Activated CD8-positive, alpha-beta T cell treated with anti-CD3 and anti-CD28 coated beads for 36 hours (primary cell): ENCODE measurements at regions of chr5 and their contacts with region 1.

Region 1: GRCh38 chr5:139293504-139294373 is at the start of gene MATR3:
- DNase-seq: peak; percentile 96
- ATAC-seq: peak; percentile 94
- H3K4me3 Mint-ChIP-seq: peak within 1 kb of the TSS; percentile 99
- H3K27ac Mint-ChIP-seq: peak within 1 kb of the TSS; percentile 98
- H3K4me1 Mint-ChIP-seq: peaks cover 32% of the 10 kb centered on the region
- H3K27me3 Mint-ChIP-seq: no peaks in the 10 kb centered on the region
- CTCF ChIP-seq: no peak
- total RNA-seq, gene MATR3: 181 to 209 TPM

Region 2: DNA sequence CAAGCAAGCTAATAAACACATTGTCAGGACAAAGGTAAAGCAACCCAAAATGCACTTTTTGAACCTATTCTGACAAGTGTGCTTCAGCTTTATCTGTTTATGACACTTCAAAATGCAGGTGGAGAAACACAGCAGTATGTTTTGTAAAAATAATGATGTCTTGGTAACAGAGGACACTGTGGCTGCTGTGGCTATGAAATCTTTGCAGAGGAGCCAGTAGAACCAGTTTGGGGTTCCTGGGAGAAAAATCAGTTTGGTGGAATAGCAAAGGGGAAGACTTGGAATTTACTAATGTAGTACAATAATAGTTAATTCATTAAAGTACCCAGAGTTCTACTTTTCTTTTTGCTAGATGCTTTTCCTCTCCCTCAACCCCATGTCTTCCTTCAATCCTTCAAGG is 136.2 kb before region 1 on chr5:
- CTCF ChIA-PET with region 1: no interaction called
- POLR2A ChIA-PET with region 1: no interaction called
- intact Hi-C with region 1: no loop called
- DNase-seq: no peak
- ATAC-seq: no peak
- H3K4me3 Mint-ChIP-seq: no peak overlapping the region
- H3K27ac Mint-ChIP-seq: no peak overlapping the region
- H3K4me1 Mint-ChIP-seq: peaks cover 3% of the 10 kb centered on the region
- H3K27me3 Mint-ChIP-seq: no peaks in the 10 kb centered on the region
- CTCF ChIP-seq: no peak

Region 3: DNA sequence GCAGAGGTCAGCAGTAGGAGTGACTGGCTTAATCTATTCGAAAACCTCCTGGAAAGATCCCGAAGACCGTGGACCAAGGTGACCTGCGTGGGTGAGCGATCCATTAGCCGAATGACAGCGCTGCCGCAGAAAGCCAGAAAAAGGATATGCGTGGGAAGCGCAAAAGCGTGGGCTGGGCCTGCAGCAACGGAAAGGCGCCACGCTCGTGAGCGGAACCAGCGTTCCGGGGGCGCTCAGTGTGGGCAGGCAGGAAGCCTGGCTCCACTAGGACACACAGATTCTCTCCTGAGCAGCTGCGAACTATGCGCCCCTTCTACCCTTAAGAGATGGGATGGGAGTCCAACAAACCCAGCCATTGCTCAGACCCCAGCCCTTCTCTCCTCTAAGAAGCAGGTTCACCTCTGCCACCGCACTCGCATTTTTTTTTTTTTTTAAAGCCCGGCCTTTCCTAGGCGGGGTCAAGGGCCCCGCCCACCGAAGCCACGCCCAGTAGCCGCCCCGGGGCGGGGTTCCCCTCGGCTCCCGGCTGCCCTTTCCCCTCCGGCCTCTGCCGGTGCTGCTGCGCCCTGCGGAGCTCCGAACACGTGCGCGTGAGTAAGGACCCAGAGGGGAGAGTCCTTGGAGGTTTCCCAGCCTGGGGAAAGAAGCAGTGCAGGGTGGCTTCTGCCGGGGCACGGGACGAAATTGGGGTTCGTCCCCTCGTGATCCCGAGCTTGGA is 20.0 kb before region 1 on chr5:
- CTCF ChIA-PET with region 1: interaction called, 8 read pairs
- POLR2A ChIA-PET with region 1: interaction called, 384 read pairs
- intact Hi-C with region 1: no loop called
- DNase-seq: peak; percentile 90
- ATAC-seq: peak; percentile 93
- H3K4me3 Mint-ChIP-seq: peak overlapping the region; percentile 97
- H3K27ac Mint-ChIP-seq: peak overlapping the region; percentile 92
- H3K4me1 Mint-ChIP-seq: peaks cover 58% of the 10 kb centered on the region
- H3K27me3 Mint-ChIP-seq: peaks cover 2% of the 10 kb centered on the region
- CTCF ChIP-seq: no peak

Region 4: GRCh38 chr5:139312075-139312474 is 18.3 kb after region 1 on chr5:
- CTCF ChIA-PET with region 1: interaction called, 4 read pairs
- POLR2A ChIA-PET with region 1: interaction called, 384 read pairs
- intact Hi-C with region 1: no loop called
- DNase-seq: no peak
- ATAC-seq: no peak
- H3K4me3 Mint-ChIP-seq: no peak overlapping the region
- H3K27ac Mint-ChIP-seq: no peak overlapping the region
- H3K4me1 Mint-ChIP-seq: peaks cover 62% of the 10 kb centered on the region
- H3K27me3 Mint-ChIP-seq: no peaks in the 10 kb centered on the region
- CTCF ChIP-seq: no peak

Region 5: DNA sequence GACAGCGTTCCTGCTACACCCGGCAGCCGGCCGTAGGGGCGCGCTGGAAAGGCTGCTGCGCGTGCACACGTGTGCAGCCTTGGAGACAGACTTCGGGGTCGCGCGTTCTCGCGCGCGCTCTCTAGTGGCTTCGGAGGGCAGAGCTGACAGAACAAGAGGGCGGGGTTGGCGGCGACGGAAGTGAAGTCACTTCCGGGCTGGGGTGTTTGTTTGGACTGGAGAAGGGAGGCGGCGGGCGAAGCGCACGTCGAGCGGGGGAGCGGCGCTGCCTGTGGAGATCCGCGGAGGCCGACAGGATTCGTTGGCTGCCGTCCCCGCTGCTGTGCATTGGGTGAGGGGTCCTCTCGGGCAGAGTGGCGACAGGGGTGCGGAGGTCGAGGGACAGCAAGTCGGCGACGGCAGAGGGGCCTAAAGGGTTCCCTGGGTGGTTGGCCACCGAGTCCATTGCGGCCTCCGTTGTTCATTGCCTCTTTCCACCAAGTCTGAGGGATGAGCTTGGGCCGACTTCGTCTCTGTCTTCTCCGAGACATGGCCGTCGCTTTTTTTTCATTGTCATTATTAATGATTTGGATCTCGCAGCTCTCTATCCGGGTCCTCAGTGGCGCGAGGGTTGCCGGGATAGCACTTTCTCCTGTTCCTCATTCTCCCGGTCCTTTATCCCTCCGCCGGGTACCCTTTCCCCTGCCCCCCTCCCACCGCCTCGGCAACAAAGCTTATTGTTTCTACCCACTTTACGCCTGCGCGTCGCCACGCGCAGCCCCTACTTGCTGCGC is 48.1 kb after region 1 on chr5 and contains the start of gene PAIP2:
- CTCF ChIA-PET with region 1: interaction called, 7 read pairs
- POLR2A ChIA-PET with region 1: interaction called, 22 read pairs
- intact Hi-C with region 1: loop called (anchors 2 kb)
- DNase-seq: peak; percentile 99
- ATAC-seq: peak; percentile 90
- H3K4me3 Mint-ChIP-seq: peak within 1 kb of the TSS; percentile 89
- H3K27ac Mint-ChIP-seq: peak within 1 kb of the TSS; percentile 95
- H3K4me1 Mint-ChIP-seq: peaks cover 39% of the 10 kb centered on the region
- H3K27me3 Mint-ChIP-seq: no peaks in the 10 kb centered on the region
- CTCF ChIP-seq: peak; percentile 70
- total RNA-seq, gene PAIP2: 110 to 113 TPM

Region 6: GRCh38 chr5:139392678-139393496 is 99.1 kb after region 1 on chr5:
- CTCF ChIA-PET with region 1: interaction called, 5 read pairs
- POLR2A ChIA-PET with region 1: interaction called, 28 read pairs
- intact Hi-C with region 1: loop called (anchors 5 kb)
- DNase-seq: peak; percentile 94
- ATAC-seq: peak; percentile 69
- H3K4me3 Mint-ChIP-seq: peak overlapping the region; percentile 96
- H3K27ac Mint-ChIP-seq: peak overlapping the region; percentile 93
- H3K4me1 Mint-ChIP-seq: peaks cover 43% of the 10 kb centered on the region
- H3K27me3 Mint-ChIP-seq: no peaks in the 10 kb centered on the region
- CTCF ChIP-seq: peak; percentile 97